ENCODE measurements at regions of chr6 and their contacts with region 1.

Region 1: DNA sequence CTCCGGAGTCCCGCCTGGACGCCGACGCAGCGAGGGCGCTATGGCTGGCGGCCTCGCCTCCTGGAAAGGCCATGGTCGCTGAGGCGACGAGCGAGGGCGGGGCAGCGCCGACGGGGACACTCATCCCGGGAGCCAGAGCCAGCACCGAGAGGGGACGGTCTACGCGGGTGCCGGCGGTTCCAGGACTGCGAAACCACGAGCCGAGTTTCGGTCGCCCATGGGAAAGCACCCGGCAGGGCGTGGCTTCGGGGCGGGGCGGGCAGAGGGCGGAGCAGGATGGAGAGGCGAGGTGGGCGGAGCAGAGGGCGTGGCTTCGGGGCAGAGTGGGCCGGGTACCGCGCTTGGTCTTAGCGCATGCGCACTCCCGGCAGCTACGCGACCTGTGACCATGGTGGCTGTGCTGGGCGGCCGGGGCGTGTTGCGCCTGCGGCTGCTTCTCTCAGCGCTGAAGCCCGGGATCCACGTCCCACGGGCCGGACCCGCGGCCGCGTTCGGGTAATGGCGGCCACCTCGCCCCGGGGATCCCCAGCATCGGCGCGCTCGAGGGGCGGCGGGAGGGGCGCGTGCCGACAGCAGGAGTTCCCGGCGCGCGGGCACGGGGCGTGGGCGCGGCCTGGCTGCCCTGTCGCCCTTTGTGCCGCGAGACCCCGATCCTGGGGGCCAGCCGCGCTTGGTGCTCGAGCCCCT is at the start of gene BPHL:
- DNase-seq: peak; percentile 99
- H3K4me3 Mint-ChIP-seq: peak within 1 kb of the TSS; percentile 78
- H3K27ac Mint-ChIP-seq: peak within 1 kb of the TSS; percentile 62
- H3K4me1 Mint-ChIP-seq: peaks cover 14% of the 10 kb centered on the region
- H3K27me3 Mint-ChIP-seq: no peaks in the 10 kb centered on the region
- total RNA-seq, gene BPHL: 10.1 to 11.4 TPM

Region 2: DNA sequence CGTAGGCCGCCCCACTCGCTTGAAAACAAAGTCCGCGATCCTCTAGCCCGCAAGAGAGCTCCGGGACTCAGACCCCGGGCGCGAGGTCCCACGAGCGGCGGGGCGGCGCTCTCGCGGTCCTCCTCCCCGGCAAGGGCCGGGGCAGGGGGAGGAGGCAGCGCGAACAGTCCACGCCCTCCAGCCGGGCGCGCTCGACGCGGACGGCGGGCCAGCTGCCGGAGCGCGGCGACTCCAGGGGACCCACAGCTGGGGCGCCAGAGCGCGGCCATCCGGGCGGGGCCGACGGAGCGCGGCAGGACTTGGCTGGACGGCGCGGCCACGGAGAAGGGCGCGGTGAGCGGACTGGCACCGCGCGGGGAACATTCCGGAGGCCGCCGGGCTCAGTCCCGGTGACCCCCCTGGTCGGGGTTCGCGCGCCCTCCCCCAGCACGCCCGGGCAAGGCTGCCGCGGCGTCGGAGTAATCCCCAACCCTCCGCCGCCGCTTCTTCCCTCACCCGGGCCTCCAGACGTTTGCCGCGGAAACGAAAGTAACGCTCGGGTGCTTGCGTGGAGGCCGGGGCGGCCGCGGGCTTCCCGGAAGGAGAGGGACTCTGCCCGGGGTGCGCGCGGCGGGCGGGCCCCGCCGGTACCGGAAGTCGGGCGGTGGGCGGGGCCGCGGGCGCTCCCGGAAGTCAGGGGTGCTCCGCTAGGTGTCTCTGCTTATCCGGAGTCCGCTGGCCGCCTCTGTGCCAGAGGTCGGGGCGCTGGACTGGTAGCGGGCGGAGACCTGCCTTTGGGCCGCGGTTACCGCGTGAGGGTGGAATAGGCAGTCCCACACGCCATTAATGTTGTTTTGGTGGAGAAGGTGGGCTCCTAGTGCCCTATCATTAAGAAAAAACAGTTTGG is 49.9 kb before region 1 on chr6 and contains the start of gene RIPK1:
- CTCF ChIA-PET with region 1: no interaction called
- POLR2A ChIA-PET with region 1: interaction called, 3 read pairs
- intact Hi-C with region 1: loop called (anchors 1 kb)
- DNase-seq: peak; percentile 96
- H3K4me3 Mint-ChIP-seq: peak within 1 kb of the TSS; percentile 96
- H3K27ac Mint-ChIP-seq: peak within 1 kb of the TSS; percentile 98
- H3K4me1 Mint-ChIP-seq: peaks cover 62% of the 10 kb centered on the region
- H3K27me3 Mint-ChIP-seq: no peaks in the 10 kb centered on the region
- total RNA-seq, gene RIPK1: 18.5 to 18.6 TPM

Region 3: DNA sequence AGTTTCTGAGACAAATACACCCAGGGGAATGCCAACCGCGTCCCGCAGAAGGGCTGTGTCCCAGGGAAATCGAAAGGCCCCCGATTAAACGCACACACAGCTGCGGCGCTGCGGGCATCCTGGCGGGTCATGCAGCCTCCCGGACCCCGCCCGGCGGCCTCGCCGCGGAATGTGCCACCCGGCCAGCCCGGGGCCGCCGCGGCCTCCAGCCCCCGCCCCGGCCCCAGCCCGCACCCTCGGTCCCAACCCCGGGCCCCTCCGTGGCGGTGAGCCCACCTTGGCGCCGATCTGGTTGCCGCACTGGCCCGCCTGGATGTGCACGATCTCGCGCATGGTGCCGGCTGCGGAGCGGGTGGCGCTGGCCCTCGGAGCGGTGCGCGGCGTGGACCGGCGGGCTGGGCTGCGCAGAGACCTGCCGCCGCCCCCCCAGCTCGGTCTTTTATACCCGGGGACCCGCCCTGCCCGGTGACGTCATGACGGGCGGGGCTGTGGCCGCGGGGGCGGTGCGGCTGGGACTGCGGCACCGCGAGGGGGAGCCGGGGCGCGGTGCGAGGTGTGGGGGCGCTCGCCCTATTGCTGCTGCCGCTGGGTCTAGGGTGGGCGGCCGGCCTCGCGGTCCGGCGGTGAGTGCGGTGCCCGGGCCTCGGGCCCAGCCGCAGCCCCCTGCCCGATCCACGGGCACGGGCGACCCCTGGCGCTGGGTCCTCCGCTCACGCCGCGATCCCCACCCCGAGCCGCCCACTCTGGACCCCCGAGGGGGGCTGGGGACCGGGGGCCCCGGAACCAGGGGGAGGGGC is 38.8 kb after region 1 on chr6 and contains the start of gene TUBB2A:
- CTCF ChIA-PET with region 1: interaction called, 4 read pairs
- POLR2A ChIA-PET with region 1: no interaction called
- intact Hi-C with region 1: loop called (anchors 2 kb)
- DNase-seq: peak; percentile 84
- H3K4me3 Mint-ChIP-seq: peak within 1 kb of the TSS; percentile 80
- H3K27ac Mint-ChIP-seq: peak within 1 kb of the TSS; percentile 50
- H3K4me1 Mint-ChIP-seq: peaks cover 23% of the 10 kb centered on the region
- H3K27me3 Mint-ChIP-seq: peaks cover 7% of the 10 kb centered on the region
- total RNA-seq, gene TUBB2A: 4.2 to 4.6 TPM

Region 4: GRCh38 chr6:3251462-3252314 is 133.2 kb after region 1 on chr6:
- CTCF ChIA-PET with region 1: interaction called, 122 read pairs
- POLR2A ChIA-PET with region 1: interaction called, 3 read pairs
- intact Hi-C with region 1: no loop called
- DNase-seq: peak; percentile 87
- H3K4me3 Mint-ChIP-seq: no peak overlapping the region
- H3K27ac Mint-ChIP-seq: no peak overlapping the region
- H3K4me1 Mint-ChIP-seq: peaks cover 4% of the 10 kb centered on the region
- H3K27me3 Mint-ChIP-seq: peaks cover 24% of the 10 kb centered on the region

Region 5: GRCh38 chr6:4018172-4018905 is 899.8 kb after region 1 on chr6:
- CTCF ChIA-PET with region 1: no interaction called
- POLR2A ChIA-PET with region 1: no interaction called
- intact Hi-C with region 1: loop called (anchors 5 kb)
- DNase-seq: peak; percentile 98
- H3K4me3 Mint-ChIP-seq: peak overlapping the region; percentile 90
- H3K27ac Mint-ChIP-seq: peak overlapping the region; percentile 97
- H3K4me1 Mint-ChIP-seq: peaks cover 63% of the 10 kb centered on the region
- H3K27me3 Mint-ChIP-seq: no peaks in the 10 kb centered on the region

Measured in activated CD4-positive, alpha-beta memory T cell treated with anti-CD3 and anti-CD28 coated beads for 36 hours (primary cell).